Activated CD4-positive, alpha-beta memory T cell treated with anti-CD3 and anti-CD28 coated beads, Interleukin-2, amount 10 ng/mL, durations not matched to agents 7 days and 5 days (primary cell): ENCODE measurements at regions of chr9 and their contacts with region 1.

Region 1: DNA sequence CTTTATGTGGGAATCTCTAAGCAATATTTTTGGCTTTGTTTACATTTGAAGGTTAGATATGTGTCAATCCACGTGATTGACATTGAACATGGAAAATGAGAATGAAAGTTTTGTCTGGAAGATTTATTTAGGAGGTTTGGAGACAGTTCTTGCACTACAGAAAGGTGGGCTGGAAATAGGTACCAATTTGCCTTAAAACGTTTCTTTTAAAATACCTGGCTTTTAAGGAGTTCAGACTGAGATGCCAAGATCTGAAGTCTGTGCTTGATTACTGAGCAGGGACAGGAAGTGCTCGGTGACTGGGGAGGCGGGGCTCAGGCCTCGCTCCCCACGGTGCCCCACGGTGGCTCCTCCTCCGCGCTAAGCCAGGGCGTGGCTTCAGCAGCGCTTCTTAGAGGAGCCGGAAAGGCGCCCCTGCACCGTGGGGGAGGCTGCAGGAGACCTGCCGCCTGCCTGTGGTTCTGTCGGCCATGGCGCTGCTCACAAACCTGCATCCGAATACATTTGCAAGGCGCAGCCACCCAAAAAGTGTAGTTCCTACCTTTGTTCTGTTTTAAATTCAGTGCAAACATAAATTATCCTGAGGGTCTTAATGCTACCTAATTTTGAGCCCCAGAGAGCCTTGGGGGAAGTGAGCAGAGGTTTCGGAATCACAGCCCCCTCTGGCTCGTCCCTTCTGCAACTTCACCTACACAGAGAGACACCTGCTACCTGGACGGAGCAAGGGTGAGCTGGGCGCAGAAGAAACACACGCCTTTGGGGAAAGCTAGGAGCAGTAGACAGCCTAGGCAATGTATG is 49.2 kb downstream of the USP20 start:
- DNase-seq: peak; percentile 98
- H3K4me3 Mint-ChIP-seq: peak overlapping the region; percentile 80
- H3K27ac Mint-ChIP-seq: peak overlapping the region; percentile 100
- H3K4me1 Mint-ChIP-seq: peaks cover 51% of the 10 kb centered on the region
- H3K27me3 Mint-ChIP-seq: no peaks in the 10 kb centered on the region

Region 2: DNA sequence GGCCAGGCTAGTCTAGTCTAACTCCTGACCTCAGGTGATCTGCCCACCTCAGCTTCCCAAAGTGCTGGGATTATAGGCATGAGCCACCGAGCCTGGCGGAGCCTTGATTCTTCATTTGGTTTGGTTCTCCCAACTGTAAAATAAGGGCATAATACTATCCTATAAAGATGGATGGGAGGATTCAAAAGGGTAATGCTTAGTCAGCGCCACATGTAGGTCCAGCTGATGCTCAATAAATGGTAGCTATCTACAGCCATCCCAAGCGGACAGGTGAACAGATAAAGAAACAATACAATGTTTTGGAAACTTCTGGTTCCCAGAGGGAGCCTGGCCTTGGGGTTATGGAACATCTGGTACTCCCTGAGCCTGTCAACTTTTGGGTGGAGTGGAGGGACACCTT is 1209.0 kb before region 1 on chr9:
- CTCF ChIA-PET with region 1: no interaction called
- POLR2A ChIA-PET with region 1: no interaction called
- DNase-seq: no peak
- H3K4me3 Mint-ChIP-seq: no peak overlapping the region
- H3K27ac Mint-ChIP-seq: no peak overlapping the region
- H3K4me1 Mint-ChIP-seq: no peaks in the 10 kb centered on the region
- H3K27me3 Mint-ChIP-seq: no peaks in the 10 kb centered on the region

Region 3: GRCh38 chr9:129868916-129869486 is 15.4 kb before region 1 on chr9:
- CTCF ChIA-PET with region 1: interaction called, 15 read pairs
- POLR2A ChIA-PET with region 1: interaction called, 301 read pairs
- DNase-seq: peak; percentile 96
- H3K4me3 Mint-ChIP-seq: peak overlapping the region; percentile 62
- H3K27ac Mint-ChIP-seq: peak overlapping the region; percentile 89
- H3K4me1 Mint-ChIP-seq: peaks cover 84% of the 10 kb centered on the region
- H3K27me3 Mint-ChIP-seq: no peaks in the 10 kb centered on the region

Region 4: DNA sequence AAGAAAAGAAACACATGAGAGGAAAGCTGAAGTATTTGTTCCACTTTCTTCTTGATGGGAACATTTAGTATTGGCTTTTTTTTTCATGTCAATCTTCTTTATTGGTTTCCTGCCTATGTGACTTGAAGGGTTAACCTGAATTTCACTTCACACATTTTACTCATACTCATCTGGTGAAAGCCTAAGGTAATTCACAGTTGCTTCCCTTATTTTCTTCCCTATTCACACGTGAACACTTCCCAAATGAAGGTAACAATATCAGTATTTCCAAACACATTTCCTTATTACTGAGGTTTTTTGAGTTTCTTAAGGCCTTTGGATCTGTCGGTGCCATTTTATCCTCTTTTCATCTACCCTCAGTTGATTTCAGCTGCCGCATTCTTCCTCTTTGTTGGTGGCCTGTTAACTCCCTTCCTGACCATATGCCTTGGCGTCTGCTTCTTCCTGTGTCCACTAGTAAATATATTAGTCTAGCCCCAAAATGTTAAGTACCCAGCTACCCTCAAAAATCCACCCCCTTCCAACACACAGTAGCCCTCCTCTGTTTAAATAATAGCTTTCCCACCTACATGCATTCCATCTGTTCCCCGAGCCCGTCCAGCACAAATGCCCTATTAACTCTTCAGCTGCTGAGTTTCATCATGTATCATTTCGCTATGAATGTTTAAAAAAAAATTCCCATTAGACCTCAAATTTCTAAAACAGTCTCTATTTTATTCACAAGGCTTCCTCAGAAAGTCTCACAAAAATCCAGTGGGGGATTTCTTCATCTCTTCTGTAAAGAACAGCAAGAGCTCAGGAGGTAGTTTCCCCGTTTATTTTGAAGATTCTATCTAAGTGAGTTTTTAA is 48.1 kb after region 1 on chr9:
- CTCF ChIA-PET with region 1: interaction called, 10 read pairs
- POLR2A ChIA-PET with region 1: interaction called, 26 read pairs
- DNase-seq: no peak
- H3K4me3 Mint-ChIP-seq: peak overlapping the region; percentile 63
- H3K27ac Mint-ChIP-seq: peak overlapping the region; percentile 77
- H3K4me1 Mint-ChIP-seq: peaks cover 62% of the 10 kb centered on the region
- H3K27me3 Mint-ChIP-seq: no peaks in the 10 kb centered on the region

Region 5: DNA sequence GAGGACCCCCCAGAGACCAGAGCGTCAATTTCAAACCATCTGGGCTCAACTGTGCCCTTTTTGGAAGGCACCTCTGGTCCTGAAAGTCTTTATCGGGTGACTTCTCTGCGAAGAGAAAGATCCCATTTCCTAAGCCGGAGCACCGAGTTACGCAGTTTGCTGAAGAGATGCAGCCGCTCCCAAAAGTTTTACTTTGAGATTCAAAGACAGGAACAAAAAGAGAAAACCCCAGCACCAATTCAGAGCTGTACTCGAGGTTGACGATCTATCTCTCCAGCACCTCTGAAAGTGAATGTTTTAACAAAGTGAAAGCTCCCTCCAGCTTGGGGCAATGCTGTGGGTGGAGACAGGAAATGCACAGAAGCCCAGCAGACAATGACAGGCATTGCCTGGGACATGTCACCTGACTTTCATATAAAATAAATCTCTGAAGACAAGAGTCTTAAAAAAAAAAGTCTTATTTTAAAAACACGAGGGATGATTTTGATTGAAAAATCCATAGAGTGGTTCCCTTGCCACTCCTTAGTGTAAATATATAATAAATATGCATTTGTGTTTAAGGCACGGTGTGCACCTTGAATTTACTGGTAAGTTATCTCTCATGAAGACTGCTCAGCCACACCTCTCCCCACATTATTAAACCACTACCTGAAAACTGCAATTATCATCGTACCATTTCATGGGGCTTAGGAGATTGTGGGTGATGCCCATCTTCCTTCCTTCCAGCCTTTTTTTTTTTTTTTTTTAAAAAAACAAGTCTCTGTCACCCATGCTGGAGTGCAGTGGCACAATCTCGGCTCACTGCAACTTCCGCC is 78.7 kb after region 1 on chr9:
- CTCF ChIA-PET with region 1: interaction called, 7 read pairs
- POLR2A ChIA-PET with region 1: interaction called, 70 read pairs
- DNase-seq: peak; percentile 83
- H3K4me3 Mint-ChIP-seq: peak overlapping the region; percentile 74
- H3K27ac Mint-ChIP-seq: peak overlapping the region; percentile 93
- H3K4me1 Mint-ChIP-seq: peaks cover 73% of the 10 kb centered on the region
- H3K27me3 Mint-ChIP-seq: no peaks in the 10 kb centered on the region

Region 6: GRCh38 chr9:130029223-130029973 is 145.0 kb after region 1 on chr9:
- CTCF ChIA-PET with region 1: interaction called, 7 read pairs
- POLR2A ChIA-PET with region 1: interaction called, 403 read pairs
- DNase-seq: peak; percentile 53
- H3K4me3 Mint-ChIP-seq: peak overlapping the region; percentile 39
- H3K27ac Mint-ChIP-seq: peak overlapping the region; percentile 88
- H3K4me1 Mint-ChIP-seq: peaks cover 90% of the 10 kb centered on the region
- H3K27me3 Mint-ChIP-seq: no peaks in the 10 kb centered on the region